Calu3 (cell line): ENCODE measurements at regions of chr12 and their contacts with region 1.

Region 1: DNA sequence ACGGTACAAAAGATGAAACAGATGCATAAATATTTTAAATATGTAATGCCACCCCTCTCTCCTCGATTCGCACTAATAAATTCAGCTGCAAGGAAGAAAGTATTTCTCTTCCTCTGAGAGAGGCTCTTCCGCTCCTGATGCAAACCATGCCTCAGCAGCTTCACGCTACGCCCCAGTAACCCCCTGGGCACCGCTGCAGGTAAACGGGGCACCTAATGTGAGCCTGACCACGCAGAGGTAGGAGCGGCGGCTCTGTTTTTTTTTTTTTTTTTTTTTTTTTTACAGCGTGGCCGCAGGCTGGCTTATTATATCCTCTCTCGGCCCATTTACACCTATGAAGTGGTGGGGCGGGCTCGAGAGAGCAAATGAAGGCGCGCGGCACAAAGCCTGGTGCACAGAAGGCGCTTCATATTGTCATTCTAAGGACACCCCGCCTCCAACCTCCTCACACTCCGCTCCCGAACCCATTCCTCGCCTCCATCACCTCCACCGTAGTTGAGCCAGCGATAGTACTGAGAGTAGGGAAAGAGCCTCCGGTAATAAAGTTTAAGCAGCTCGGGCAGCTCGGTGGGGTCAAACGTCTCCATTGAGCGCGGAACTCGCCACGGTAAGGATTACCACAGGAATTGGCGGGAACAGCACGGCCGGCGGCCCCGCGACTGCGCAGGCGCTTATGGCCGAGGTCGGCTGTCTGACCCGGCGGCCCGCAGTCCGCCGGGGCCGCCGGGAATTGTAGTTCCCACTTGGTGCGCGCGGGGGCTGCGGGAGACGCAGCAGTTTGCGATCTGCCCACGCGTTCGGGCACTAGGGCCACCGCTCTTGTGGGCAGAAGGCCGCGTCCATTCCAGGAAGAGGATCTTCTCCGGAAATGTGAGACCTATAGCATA is at the start of gene PRIM1:
- DNase-seq: peak; percentile 93
- H3K4me3 Mint-ChIP-seq: peak within 1 kb of the TSS; percentile 71
- H3K27ac Mint-ChIP-seq: peak within 1 kb of the TSS; percentile 15
- H3K4me1 Mint-ChIP-seq: peaks cover 16% of the 10 kb centered on the region
- H3K27me3 Mint-ChIP-seq: no peaks in the 10 kb centered on the region
- CTCF ChIP-seq: peak; percentile 73
- total RNA-seq, gene PRIM1: 35.3 and 39.7 TPM in 2 replicates

Region 2: DNA sequence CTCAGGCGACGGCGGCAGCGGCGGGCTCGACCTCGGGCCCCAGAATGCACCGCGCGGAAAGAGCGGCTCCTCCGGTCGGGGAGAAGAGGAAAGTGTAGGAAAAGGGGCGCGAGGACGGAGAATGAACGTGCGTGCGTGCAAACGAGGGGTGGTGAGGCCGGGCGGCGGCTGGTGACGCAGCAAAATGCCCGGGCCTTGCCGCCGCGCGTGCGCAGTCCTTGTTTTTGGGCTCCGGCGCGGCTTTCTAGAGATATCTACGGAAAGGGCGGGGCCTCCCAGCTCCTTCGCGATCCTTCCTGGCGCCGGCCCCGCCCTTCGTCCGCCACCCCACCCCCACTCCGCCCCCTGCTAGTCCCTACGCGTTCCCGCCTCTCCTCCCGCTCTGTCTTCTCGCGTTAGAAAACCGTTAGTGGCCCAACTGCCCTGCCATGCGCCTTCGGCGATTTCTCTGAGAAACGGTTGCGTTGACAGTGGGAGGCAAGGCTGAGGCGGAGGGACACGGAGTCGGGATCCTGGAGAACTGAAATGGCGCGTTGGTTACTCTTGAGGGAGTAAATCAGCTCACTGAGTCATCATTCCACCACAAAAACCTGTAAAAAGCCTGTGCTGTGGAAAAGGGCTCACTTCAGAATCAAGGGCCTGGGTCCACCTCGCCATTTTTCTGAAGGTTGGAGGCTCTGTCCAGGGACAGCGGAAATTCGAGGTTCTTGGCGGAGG is 63.7 kb before region 1 on chr12 and contains the start of gene PTGES3:
- CTCF ChIA-PET with region 1: interaction called, 10 read pairs
- intact Hi-C with region 1: no loop called
- DNase-seq: peak; percentile 99
- H3K4me3 Mint-ChIP-seq: peak within 1 kb of the TSS; percentile 99
- H3K27ac Mint-ChIP-seq: peak within 1 kb of the TSS; percentile 100
- H3K4me1 Mint-ChIP-seq: peaks cover 12% of the 10 kb centered on the region
- H3K27me3 Mint-ChIP-seq: no peaks in the 10 kb centered on the region
- CTCF ChIP-seq: no peak
- total RNA-seq, gene PTGES3: 435 and 437 TPM in 2 replicates

Region 3: GRCh38 chr12:56922031-56922430 is 170.1 kb after region 1 on chr12:
- CTCF ChIA-PET with region 1: no interaction called
- intact Hi-C with region 1: no loop called
- DNase-seq: no peak
- H3K4me3 Mint-ChIP-seq: no peak overlapping the region
- H3K27ac Mint-ChIP-seq: no peak overlapping the region
- H3K4me1 Mint-ChIP-seq: no peaks in the 10 kb centered on the region
- H3K27me3 Mint-ChIP-seq: peaks cover 45% of the 10 kb centered on the region
- CTCF ChIP-seq: no peak

Region 4: GRCh38 chr12:56987551-56988053 is 235.6 kb after region 1 on chr12:
- CTCF ChIA-PET with region 1: interaction called, 14 read pairs
- intact Hi-C with region 1: loop called (anchors 2 kb)
- DNase-seq: peak; percentile 86
- H3K4me3 Mint-ChIP-seq: no peak overlapping the region
- H3K27ac Mint-ChIP-seq: no peak overlapping the region
- H3K4me1 Mint-ChIP-seq: peaks cover 23% of the 10 kb centered on the region
- H3K27me3 Mint-ChIP-seq: peaks cover 29% of the 10 kb centered on the region
- CTCF ChIP-seq: peak; percentile 95

Region 5: DNA sequence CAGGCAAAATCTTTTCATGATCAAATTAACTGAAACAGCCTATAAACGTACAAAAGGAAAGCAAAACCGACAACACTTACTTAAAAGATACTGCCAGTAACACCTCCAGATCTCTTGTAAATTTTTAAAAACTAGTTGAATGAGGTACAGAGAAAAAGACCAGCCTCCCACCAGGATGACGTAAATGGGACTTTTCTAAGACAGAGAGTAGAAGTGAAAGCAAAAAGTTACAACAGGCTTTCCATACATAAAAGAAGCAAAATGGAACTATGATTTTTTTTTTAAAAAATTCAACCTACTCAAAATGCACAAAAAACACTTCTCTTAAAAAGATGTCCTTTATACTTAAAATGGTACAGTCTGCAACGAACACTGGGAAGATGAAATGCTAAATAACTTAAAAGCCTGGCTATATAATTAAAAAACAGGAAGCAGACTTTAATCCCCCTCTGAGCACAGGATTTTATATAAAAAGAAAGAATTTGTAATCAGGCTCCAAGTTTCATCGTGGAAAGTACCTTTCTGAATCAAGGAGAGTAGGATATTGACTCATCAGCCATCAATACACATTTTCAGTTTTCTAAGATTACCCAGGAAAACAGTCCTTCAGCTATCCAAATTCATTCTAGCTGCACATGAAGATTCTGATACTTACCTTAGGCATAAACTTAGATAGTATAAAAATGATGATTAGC is 312.2 kb after region 1 on chr12:
- CTCF ChIA-PET with region 1: interaction called, 4 read pairs
- intact Hi-C with region 1: loop called (anchors 2 kb)
- DNase-seq: no peak
- H3K4me3 Mint-ChIP-seq: no peak overlapping the region
- H3K27ac Mint-ChIP-seq: no peak overlapping the region
- H3K4me1 Mint-ChIP-seq: no peaks in the 10 kb centered on the region
- H3K27me3 Mint-ChIP-seq: no peaks in the 10 kb centered on the region
- CTCF ChIP-seq: no peak